Ovary (tissue), 10 donors: ENCODE measurements at regions of chr19 and their contacts with region 1.

Region 1: GRCh38 chr19:12777217-12778016 is 2.1 kb upstream of the HOOK2 start:
- DNase-seq: peak; percentile 76 to 89 (median 86)
- H3K4me3 ChIP-seq: peak overlapping the region; percentile 49
- H3K27ac ChIP-seq: peak overlapping the region; percentile 84 to 94
- H3K4me1 ChIP-seq: peaks cover 11% of the 10 kb centered on the region
- H3K27me3 ChIP-seq: no peaks in the 10 kb centered on the region
- CTCF ChIP-seq: peak; percentile 92 to 97 (median 96)
- EP300 ChIP-seq: no peak
- POLR2A ChIP-seq: no peak

Region 2: DNA sequence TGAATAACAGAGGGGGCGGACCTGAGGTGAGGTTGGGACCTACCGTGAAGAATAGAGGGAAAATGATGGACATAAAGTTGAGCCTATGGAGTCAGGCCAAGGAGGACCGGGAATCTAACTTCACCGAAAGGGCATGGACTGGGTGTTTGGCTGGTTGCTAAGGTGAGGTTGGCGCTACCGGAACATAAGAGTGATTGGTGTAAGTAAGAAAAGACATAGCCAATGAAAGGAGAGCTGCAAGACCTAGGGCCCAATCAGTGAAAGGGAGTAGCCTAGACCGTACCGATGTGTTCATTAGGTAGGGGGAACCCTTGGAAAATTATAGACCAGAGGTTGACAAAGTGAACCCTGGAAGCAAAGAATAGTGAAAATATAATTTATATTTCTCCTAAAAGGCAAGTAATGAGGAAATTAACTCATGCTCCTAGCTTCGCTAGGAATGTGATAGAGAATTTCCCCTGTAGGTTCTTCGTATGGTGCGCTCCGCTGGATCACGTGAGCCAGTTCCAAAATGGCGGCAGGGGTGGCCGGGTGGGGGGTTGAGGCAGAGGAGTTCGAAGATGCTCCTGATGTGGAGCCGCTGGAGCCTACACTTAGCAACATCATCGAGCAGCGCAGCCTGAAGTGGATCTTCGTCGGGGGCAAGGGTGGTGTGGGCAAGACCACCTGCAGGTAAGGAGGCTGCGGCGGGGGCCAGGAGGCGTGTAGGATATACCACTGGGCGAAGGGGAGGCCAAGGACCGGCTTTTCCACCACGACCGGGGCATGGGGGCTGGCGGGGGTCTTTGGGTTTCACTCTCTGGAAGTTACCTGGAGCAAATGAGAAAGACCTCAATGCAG is 40.2 kb before region 1 on chr19 and contains the start of gene GET3:
- intact Hi-C with region 1: loop called in 1 of 4 experiments (anchors 2 kb)
- DNase-seq: peak; percentile 71 to 94 (median 83)
- H3K4me3 ChIP-seq: peak within 1 kb of the TSS; percentile 87
- H3K27ac ChIP-seq: peak within 1 kb of the TSS; percentile 52 to 77
- H3K4me1 ChIP-seq: peaks cover 16% of the 10 kb centered on the region
- H3K27me3 ChIP-seq: no peaks in the 10 kb centered on the region
- CTCF ChIP-seq: peak in 2 of 3 donors; percentile 42 to 58
- EP300 ChIP-seq: no peak
- POLR2A ChIP-seq: peak; percentile 53
- total RNA-seq, gene GET3: 26.2 to 59.0 (median 47.7) TPM

Region 3: DNA sequence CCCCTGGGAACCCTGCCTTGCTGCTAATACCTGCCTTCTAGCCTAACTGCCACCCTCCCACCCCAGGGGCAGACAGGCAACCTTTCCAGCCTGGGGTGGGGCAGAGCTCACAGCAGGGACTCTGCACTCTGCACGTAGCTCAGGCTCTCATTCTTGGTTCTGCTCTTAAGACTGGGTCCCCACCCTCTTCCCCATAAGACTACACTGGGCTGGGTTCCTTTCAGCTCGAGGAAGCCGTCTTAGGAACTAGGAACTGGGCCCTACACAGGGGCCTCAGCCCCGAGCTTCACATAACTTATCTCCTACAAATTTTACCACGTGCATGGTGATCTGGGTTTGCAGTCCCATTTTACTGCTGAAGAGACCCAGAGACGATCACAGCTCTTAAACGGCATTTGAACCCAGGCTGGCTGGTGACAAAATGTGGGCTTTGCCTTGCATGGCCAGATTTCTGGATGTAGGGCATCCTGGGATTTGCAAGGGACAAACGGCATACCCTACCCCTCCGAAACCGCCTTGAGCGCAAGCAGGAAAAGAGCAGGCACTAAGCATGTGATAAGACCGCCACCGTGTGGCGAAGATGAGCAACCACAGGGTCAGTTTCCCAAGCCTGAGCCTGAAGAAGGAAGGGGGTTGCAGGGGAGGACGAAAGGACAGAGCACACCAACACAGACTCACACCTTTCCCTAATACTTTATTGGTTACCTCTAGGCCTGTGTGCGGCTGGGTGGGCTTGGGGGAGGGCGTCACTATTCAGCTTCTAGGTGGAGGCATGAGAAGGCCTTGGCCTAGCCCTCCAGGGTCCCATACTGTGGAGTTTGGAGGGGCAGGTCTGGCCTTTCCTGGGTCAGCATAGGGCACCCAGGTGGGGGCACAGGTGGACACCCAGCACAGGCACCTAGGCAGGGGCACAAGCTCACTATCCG is 19.0 kb after region 1 on chr19:
- intact Hi-C with region 1: loop called in 3 of 4 experiments (anchors 1 to 2 kb)
- DNase-seq: peak; percentile 73 to 83 (median 81)
- H3K4me3 ChIP-seq: no peak overlapping the region
- H3K27ac ChIP-seq: peak overlapping the region in 1 of 2 donors; percentile 42
- H3K4me1 ChIP-seq: peaks cover 4% of the 10 kb centered on the region
- H3K27me3 ChIP-seq: no peaks in the 10 kb centered on the region
- CTCF ChIP-seq: peak; percentile 89 to 96 (median 94)
- EP300 ChIP-seq: no peak
- POLR2A ChIP-seq: peak; percentile 21

Region 4: DNA sequence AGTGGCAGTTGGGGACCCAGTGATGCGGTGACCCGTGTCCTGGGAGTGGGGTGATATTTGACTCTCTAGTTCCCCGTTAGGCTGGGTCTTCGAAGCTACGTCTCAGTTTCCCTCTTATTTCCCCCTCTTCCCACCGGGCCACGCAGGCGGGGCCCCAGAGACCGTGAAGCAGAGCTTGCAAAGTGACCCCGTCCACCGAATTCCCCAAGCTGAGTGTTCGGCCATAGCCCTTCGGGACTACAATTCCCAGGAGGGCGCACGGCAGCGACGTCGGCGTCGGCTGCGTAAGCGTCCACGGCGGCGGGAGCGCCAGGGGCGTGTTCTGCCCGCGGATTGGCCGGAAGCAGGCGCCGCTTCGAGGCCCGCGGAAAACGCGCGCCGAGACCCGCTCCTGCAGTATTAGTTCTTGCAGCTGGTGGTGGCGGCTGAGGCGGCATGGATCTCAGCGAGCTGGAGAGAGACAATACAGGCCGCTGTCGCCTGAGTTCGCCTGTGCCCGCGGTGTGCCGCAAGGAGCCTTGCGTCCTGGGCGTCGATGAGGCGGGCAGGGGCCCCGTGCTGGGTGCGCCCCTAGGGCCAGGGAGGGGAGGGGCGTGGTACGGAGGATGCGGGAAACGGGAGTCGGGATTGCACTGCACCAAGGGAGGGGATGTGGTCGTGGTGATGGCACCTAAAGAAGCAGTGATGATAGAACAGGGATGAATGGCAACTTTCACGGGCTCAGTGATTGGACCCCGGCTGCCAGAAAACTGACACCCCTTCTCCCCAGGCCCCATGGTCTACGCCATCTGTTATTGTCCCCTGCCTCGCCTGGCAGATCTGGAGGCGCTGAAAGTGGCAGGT is 29.0 kb after region 1 on chr19 and contains the start of gene RNASEH2A:
- intact Hi-C with region 1: loop called in 1 of 4 experiments (anchors 5 kb)
- DNase-seq: peak; percentile 83 to 93 (median 88)
- H3K4me3 ChIP-seq: peak within 1 kb of the TSS; percentile 48
- H3K27ac ChIP-seq: peak within 1 kb of the TSS in 1 of 2 donors; percentile 17
- H3K4me1 ChIP-seq: peaks cover 8% of the 10 kb centered on the region
- H3K27me3 ChIP-seq: no peaks in the 10 kb centered on the region
- CTCF ChIP-seq: peak in 1 of 3 donors; percentile 10
- EP300 ChIP-seq: no peak
- POLR2A ChIP-seq: no peak
- total RNA-seq, gene RNASEH2A: 1.2 to 12.2 (median 7.7) TPM

Region 5: GRCh38 chr19:12867120-12868099 is 90.0 kb after region 1 on chr19:
- intact Hi-C with region 1: no loop called
- DNase-seq: peak; percentile 69 to 88 (median 81)
- H3K4me3 ChIP-seq: peak overlapping the region; percentile 27
- H3K27ac ChIP-seq: no peak overlapping the region
- H3K4me1 ChIP-seq: no peaks in the 10 kb centered on the region
- H3K27me3 ChIP-seq: no peaks in the 10 kb centered on the region
- CTCF ChIP-seq: no peak
- EP300 ChIP-seq: no peak
- POLR2A ChIP-seq: no peak